ENCODE measurements at regions of chr2 and their contacts with region 1.

Region 1: DNA sequence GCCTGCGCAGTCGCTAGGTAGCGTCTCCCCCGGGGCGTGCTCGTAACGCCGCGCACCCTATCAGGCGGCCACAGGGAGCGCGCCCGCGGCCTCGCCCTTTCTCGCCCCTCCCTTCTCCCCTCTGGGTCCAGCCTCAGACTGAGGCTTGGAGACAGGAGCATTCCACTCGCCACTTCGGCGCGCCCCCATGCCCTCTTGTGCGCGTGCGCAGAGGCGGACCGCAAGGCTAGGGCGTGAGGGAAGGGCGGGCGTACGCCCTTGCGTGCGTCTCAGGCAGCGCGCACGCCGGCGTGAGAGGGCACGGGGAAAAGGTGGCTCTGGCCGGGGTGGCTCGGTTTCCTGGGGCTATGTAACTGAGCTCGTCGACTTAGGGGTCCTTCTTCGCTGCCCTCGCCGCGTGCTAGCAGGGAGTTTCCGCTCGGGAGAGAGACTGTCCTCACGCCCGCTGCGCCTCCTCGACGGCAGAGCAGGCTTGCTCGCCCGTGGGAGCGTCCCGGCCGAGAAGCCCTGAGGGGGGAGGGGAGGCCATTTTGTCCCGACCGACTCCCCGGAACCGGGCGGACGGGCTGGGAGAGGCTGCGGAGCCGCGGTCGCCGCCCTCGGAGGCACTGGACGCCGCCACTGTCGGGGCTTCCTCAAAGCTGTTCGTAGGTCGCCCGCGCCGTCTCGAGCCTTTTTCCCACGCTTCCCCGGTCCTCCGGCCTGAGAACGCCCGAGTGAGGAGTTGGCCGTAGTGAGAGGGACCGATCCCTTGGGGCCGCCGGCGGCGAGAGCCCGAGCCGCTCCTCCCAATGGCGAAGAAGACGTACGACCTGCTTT is at the start of gene RAB10:
- DNase-seq: peak; percentile 100
- ATAC-seq: peak; percentile 91
- H3K4me3 ChIP-seq: peak within 1 kb of the TSS; percentile 78 to 97 (median 89)
- H3K4me3 Mint-ChIP-seq: peak within 1 kb of the TSS; percentile 97
- H3K27ac ChIP-seq: peak within 1 kb of the TSS; percentile 81 to 94
- H3K27ac Mint-ChIP-seq: peak within 1 kb of the TSS; percentile 98
- H3K4me1 ChIP-seq: peaks cover 22 to 29% of the 10 kb centered on the region in 2 donors
- H3K4me1 Mint-ChIP-seq: peaks cover 39% of the 10 kb centered on the region
- H3K27me3 ChIP-seq: no peaks in the 10 kb centered on the region
- H3K27me3 Mint-ChIP-seq: no peaks in the 10 kb centered on the region
- CTCF ChIP-seq: no peak
- total RNA-seq, gene RAB10: 64.1 and 66.7 TPM in 2 replicates

Region 2: GRCh38 chr2:25673300-25674076 is 360.5 kb before region 1 on chr2 and contains the start of gene DTNB:
- CTCF ChIA-PET with region 1: no interaction called
- POLR2A ChIA-PET with region 1: no interaction called
- intact Hi-C with region 1: loop called (anchors 5 kb)
- DNase-seq: peak; percentile 89
- ATAC-seq: peak; percentile 74
- H3K4me3 ChIP-seq: peak within 1 kb of the TSS; percentile 75 to 85 (median 82)
- H3K4me3 Mint-ChIP-seq: peak within 1 kb of the TSS; percentile 94
- H3K27ac ChIP-seq: peak within 1 kb of the TSS; percentile 59 to 71
- H3K27ac Mint-ChIP-seq: peak within 1 kb of the TSS; percentile 91
- H3K4me1 ChIP-seq: peaks cover 8 to 16% of the 10 kb centered on the region in 2 donors
- H3K4me1 Mint-ChIP-seq: peaks cover 16% of the 10 kb centered on the region
- H3K27me3 ChIP-seq: peaks cover 0 to 2% (median 0%) of the 10 kb centered on the region in 4 experiments
- H3K27me3 Mint-ChIP-seq: no peaks in the 10 kb centered on the region
- CTCF ChIP-seq: no peak
- total RNA-seq, gene DTNB: 37.3 and 45.8 TPM in 2 replicates

Region 3: DNA sequence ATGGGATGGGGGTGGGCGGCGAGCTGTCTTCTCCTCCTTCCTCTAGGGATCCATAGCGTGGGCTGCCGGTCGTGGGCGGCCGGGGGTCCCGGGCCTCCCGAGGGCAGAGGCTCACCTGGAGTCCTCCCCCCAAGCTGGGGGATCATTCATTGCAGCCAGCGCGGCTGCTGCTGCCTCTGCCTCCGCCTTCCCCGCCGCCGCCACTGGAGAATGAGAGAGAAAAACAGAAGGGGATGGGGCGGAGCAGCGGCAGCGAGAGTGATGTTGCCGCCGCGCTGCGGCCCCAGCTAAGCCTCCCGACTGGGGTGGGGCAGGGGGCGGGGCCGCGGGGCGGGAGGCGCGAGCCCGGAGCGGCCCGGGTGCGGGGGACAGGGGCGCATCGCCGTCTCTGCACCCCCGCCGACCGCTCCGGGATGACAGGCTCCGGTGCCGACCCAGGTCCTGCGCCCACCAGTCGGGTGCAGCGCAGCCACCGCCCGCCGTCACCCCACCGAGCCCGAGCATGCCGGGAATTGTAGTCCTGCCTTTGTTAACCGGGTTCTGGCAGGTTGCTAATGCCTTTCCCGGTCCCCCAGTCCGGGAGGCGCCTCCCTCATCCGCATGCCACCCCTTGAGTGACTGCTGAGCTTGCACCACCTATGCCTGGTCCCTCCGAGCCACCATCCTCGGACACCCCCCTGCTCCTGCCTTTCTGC is 51.6 kb before region 1 on chr2 and contains the start of gene KIF3C:
- CTCF ChIA-PET with region 1: interaction called, 3 read pairs
- POLR2A ChIA-PET with region 1: no interaction called
- intact Hi-C with region 1: loop called (anchors 1 kb)
- DNase-seq: peak; percentile 76
- ATAC-seq: peak; percentile 87
- H3K4me3 ChIP-seq: peak within 1 kb of the TSS; percentile 36 to 81 (median 70)
- H3K4me3 Mint-ChIP-seq: peak within 1 kb of the TSS; percentile 88
- H3K27ac ChIP-seq: peak within 1 kb of the TSS in 1 of 2 donors; percentile 53
- H3K27ac Mint-ChIP-seq: peak within 1 kb of the TSS; percentile 61
- H3K4me1 ChIP-seq: peaks cover 6 to 14% of the 10 kb centered on the region in 2 donors
- H3K4me1 Mint-ChIP-seq: peaks cover 8% of the 10 kb centered on the region
- H3K27me3 ChIP-seq: peaks cover 0 to 3% (median 0%) of the 10 kb centered on the region in 4 experiments
- H3K27me3 Mint-ChIP-seq: no peaks in the 10 kb centered on the region
- CTCF ChIP-seq: no peak
- total RNA-seq, gene KIF3C: 4.0 and 6.9 TPM in 2 replicates

Region 4: GRCh38 chr2:26184555-26185303 is 150.7 kb after region 1 on chr2:
- CTCF ChIA-PET with region 1: interaction called, 3 read pairs
- POLR2A ChIA-PET with region 1: no interaction called
- intact Hi-C with region 1: loop called (anchors 5 kb)
- DNase-seq: peak; percentile 91
- ATAC-seq: peak; percentile 98
- H3K4me3 ChIP-seq: peak overlapping the region in 4 of 5 experiments; percentile 46 to 69 (median 55)
- H3K4me3 Mint-ChIP-seq: peak overlapping the region; percentile 87
- H3K27ac ChIP-seq: no peak overlapping the region
- H3K27ac Mint-ChIP-seq: no peak overlapping the region
- H3K4me1 ChIP-seq: peaks cover 8 to 13% of the 10 kb centered on the region in 2 donors
- H3K4me1 Mint-ChIP-seq: peaks cover 19% of the 10 kb centered on the region
- H3K27me3 ChIP-seq: peaks cover 0 to 20% (median 3%) of the 10 kb centered on the region in 4 experiments
- H3K27me3 Mint-ChIP-seq: peaks cover 13% of the 10 kb centered on the region
- CTCF ChIP-seq: peak; percentile 68

Region 5: GRCh38 chr2:26244309-26245121 is 210.5 kb after region 1 on chr2 and contains the starts of genes HADHA and HADHB:
- CTCF ChIA-PET with region 1: interaction called, 3 read pairs
- POLR2A ChIA-PET with region 1: interaction called, 4 read pairs
- intact Hi-C with region 1: loop called (anchors 1 kb)
- DNase-seq: peak; percentile 96
- ATAC-seq: peak; percentile 85
- H3K4me3 ChIP-seq: peak within 1 kb of the TSS; percentile 68 to 100 (median 92)
- H3K4me3 Mint-ChIP-seq: peak within 1 kb of the TSS; percentile 100
- H3K27ac ChIP-seq: peak within 1 kb of the TSS; percentile 93 to 99
- H3K27ac Mint-ChIP-seq: peak within 1 kb of the TSS; percentile 100
- H3K4me1 ChIP-seq: peaks cover 32 to 43% of the 10 kb centered on the region in 2 donors
- H3K4me1 Mint-ChIP-seq: peaks cover 62% of the 10 kb centered on the region
- H3K27me3 ChIP-seq: no peaks in the 10 kb centered on the region
- H3K27me3 Mint-ChIP-seq: no peaks in the 10 kb centered on the region
- CTCF ChIP-seq: no peak
- total RNA-seq, gene HADHA: 96.7 and 104 TPM in 2 replicates
- total RNA-seq, gene HADHB: 64.2 and 70.3 TPM in 2 replicates